ENCODE measurements at regions of chr17 and their contacts with region 1.

Region 1: GRCh38 chr17:47895856-47896671 is at the start of gene SP2:
- DNase-seq: peak; percentile 100
- ATAC-seq: peak; percentile 92 to 95
- H3K4me3 ChIP-seq: peak within 1 kb of the TSS; percentile 75 to 86 (median 83)
- H3K27ac ChIP-seq: peak within 1 kb of the TSS; percentile 94 to 99 (median 96)
- H3K4me1 ChIP-seq: peaks cover 42 to 50% of the 10 kb centered on the region in 2 donors
- H3K27me3 ChIP-seq: no peaks in the 10 kb centered on the region
- CTCF ChIP-seq: peak in 3 of 5 experiments; percentile 15 to 59 (median 25)
- POLR2A ChIP-seq: peak; percentile 95 to 96
- total RNA-seq, gene SP2: 5.5 to 28.6 (median 7.0) TPM

Region 2: DNA sequence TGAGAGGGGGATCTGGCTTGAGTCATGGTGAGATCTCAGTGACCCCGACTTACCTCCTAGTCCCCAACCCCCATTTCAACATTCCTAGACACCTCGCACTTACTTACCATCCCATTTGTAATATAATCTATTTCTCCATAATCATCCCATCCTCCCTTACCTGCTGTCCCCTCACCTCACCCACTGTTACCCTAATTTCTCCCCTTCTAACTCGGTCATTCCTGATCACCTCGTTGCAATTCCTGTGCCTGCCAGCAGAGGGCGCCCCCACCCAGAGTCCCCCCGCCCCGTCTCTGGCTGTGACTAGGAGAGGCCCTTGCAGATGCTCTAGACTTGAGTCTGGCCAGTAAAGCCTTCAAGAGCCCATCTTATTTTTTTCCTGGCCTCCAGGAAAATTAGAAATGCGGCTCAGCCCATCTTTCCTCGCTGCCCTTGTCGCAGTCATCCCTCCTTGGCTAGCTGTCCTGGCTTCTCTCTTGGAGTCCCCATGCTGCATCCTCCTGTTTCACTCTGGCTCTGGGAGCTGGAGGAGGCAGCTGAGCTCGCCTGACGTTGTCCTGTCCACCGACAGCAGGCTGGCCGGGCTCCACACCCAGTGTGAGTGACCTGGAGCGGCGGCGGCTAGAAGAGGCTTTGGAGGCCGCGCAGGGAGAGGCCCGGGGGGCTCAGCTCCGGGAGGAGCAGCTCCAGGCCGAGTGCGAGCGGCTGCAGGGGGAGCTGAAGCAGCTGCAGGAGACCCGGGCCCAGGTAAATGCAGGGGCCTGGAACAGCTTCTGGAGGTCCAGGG is 197.1 kb before region 1 on chr17:
- in situ Hi-C with region 1: no loop called
- intact Hi-C with region 1: loop called (anchors 5 kb)
- DNase-seq: no peak
- ATAC-seq: no peak
- H3K4me3 ChIP-seq: no peak overlapping the region
- H3K27ac ChIP-seq: no peak overlapping the region
- H3K4me1 ChIP-seq: peaks cover 4 to 7% of the 10 kb centered on the region in 2 donors
- H3K27me3 ChIP-seq: no peaks in the 10 kb centered on the region
- CTCF ChIP-seq: peak; percentile 57 to 97 (median 84)
- POLR2A ChIP-seq: no peak

Region 3: GRCh38 chr17:47941236-47941994 is 45.4 kb after region 1 on chr17 and contains the start of gene PNPO:
- in situ Hi-C with region 1: loop called in 1 of 4 experiments (anchors 10 kb)
- intact Hi-C with region 1: loop called (anchors 2 kb)
- DNase-seq: peak; percentile 95 to 97
- ATAC-seq: peak; percentile 100
- H3K4me3 ChIP-seq: peak within 1 kb of the TSS; percentile 77 to 99 (median 88)
- H3K27ac ChIP-seq: peak within 1 kb of the TSS; percentile 88 to 98 (median 92)
- H3K4me1 ChIP-seq: peaks cover 13 to 20% of the 10 kb centered on the region in 2 donors
- H3K27me3 ChIP-seq: no peaks in the 10 kb centered on the region
- CTCF ChIP-seq: peak in 2 of 5 experiments; percentile 23 to 24
- POLR2A ChIP-seq: peak; percentile 55 to 71
- total RNA-seq, gene PNPO: 27.9 to 64.0 (median 41.5) TPM

Region 4: DNA sequence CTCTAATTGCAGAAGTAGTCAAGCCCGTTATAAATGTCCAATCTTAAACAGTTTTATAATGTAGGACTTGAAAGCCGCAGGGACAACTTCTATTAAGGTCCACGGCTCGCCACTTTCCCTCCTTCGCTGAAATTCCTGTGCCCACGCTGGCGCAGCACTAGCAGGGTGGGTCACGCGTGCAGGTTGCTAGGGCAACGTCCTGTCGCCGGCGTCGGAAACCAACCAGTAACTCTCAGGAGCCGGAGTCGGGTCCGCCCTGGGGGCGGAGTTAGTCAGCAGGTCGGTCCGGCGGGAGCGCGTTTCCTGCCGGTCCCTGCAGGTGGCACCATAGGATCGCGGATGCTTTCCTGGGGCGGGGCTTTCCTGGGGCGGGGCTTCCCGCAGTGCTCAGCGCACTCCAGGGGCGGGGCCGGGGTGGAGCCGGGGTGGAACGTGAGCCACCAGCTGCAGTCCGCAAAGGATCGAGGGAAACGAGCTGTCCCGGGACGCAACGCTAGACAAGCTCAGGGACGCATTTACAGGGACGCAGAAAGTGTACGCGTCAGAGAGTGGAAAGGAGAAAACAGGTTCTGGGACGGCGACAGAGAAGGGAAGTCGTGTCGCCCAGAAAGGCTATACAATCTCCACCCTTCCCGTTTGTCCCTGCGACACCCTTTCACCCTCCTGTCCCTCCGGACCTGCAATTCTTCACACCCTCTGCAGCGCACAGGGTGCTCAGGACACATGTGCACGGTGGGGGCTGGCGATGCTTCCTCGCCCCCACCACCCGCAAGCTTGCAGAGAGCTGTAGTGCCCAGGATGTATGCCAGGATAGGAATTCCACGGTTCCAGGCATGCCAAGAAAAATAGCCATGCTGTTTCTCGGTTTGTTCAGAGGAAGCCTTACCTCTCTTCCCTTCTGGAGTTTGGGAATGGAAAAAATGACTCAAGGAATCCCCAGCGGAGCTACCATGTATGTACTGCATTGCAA is 129.2 kb after region 1 on chr17:
- in situ Hi-C with region 1: no loop called
- intact Hi-C with region 1: loop called (anchors 5 kb)
- DNase-seq: peak; percentile 95 to 96
- ATAC-seq: peak; percentile 82 to 84
- H3K4me3 ChIP-seq: peak overlapping the region; percentile 57 to 66 (median 60)
- H3K27ac ChIP-seq: peak overlapping the region; percentile 77 to 89 (median 81)
- H3K4me1 ChIP-seq: peaks cover 33 to 39% of the 10 kb centered on the region in 2 donors
- H3K27me3 ChIP-seq: no peaks in the 10 kb centered on the region
- CTCF ChIP-seq: peak; percentile 69 to 93 (median 90)
- POLR2A ChIP-seq: peak; percentile 38 to 60

Region 5: DNA sequence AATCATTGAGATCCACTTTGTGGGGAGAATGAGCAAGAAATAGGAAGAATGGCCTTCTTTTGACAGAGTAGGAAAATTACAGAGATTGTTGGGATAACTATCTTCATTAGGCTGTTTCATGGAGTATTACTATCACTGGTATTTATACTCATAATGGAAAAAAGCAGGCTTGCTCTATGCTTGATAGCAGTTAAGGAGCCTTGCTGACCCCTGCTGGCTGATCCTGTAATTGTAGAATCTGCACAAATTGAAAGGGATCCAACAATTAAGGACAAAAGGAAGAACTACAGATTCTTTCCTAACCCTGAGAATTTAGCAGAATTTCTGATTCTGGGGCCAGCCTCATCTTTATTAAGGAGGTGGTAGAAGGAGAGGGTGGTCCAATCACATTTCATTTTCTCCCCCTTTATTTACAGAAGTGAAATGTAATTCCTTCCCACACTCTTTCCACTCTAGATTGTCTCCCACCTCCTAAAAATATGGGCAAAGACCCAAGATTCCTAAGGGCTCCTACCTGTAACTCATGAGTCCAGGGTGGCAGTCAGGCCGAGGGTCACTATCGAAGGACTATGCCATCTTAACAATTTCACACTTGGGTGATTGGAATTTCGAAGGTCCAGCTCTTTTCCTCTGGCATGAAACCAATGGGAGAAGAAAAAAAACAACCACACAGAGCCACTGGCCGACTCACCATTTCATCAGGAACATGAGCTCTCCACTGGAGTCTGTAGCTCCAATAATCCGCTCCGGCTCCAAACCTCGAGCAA is 178.4 kb after region 1 on chr17:
- in situ Hi-C with region 1: no loop called
- intact Hi-C with region 1: no loop called
- DNase-seq: peak; percentile 56 to 79
- ATAC-seq: peak; percentile 68 to 80
- H3K4me3 ChIP-seq: no peak overlapping the region
- H3K27ac ChIP-seq: peak overlapping the region; percentile 68 to 97 (median 82)
- H3K4me1 ChIP-seq: peaks cover 6 to 14% of the 10 kb centered on the region in 2 donors
- H3K27me3 ChIP-seq: no peaks in the 10 kb centered on the region
- CTCF ChIP-seq: peak; percentile 83 to 97 (median 86)
- POLR2A ChIP-seq: no peak

Region 6: GRCh38 chr17:49191917-49192741 is 1296.1 kb after region 1 on chr17:
- in situ Hi-C with region 1: no loop called
- intact Hi-C with region 1: loop called (anchors 5 kb)
- DNase-seq: peak; percentile 83 to 88
- ATAC-seq: peak; percentile 90 to 93
- H3K4me3 ChIP-seq: peak overlapping the region; percentile 68 to 92 (median 86)
- H3K27ac ChIP-seq: peak overlapping the region; percentile 93 to 99 (median 97)
- H3K4me1 ChIP-seq: peaks cover 0 to 3% of the 10 kb centered on the region in 2 donors
- H3K27me3 ChIP-seq: no peaks in the 10 kb centered on the region
- CTCF ChIP-seq: peak; percentile 11 to 45 (median 32)
- POLR2A ChIP-seq: peak; percentile 58 to 63